ENCODE measurements at regions of chr5 and their contacts with region 1.

Region 1: GRCh38 chr5:72816311-72817145 is at the start of gene TNPO1:
- DNase-seq: peak; percentile 92
- H3K4me3 ChIP-seq: peak within 1 kb of the TSS; percentile 78
- H3K27ac ChIP-seq: peak within 1 kb of the TSS; percentile 86
- H3K4me1 ChIP-seq: peaks cover 21% of the 10 kb centered on the region
- CTCF ChIP-seq: no peak
- total RNA-seq, gene TNPO1: 95.2 and 131 TPM in 2 replicates

Region 2: DNA sequence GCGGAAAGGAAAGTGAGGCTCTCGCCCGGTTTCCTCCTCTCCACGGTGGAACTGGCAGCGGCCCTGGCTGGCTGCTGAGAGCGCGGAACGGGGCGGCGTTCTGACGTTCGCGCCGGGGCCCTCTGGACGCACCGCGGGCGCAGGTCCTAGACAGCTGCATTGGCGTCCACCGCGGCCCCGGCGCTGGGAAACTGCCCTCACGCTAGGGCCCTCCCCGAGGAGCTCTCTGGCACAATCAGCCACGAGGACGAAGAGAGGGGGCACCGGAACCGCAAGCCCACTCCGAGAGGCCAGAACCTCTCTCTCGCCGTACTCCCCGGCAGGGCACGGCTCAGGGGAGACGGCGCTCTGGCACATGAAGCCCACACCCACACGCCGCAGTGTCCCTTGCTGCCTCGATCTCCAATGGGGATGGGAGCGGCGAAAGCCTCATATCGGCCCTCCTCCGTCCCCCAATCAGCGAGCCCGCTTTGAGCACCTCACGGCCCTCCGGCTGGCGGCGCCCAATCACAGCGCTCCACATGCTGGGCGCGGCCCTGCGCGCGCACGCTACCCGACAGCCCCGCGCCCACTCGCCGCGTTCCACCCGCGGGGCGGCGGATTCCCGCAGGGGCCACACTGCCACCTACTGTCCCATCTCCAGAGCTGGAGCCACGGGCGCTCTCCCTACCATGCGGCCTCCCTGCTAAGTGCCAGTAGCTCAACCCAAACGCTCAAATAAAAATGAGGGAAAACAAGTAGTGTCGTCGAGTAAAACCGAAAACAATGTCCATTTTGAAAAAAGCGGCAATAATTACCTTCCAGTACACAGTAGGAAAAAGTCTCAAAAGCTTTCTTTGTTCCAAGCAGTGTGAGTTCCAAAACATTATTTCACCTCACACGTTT is 508.3 kb before region 1 on chr5:
- CTCF ChIA-PET with region 1: no interaction called
- POLR2A ChIA-PET with region 1: interaction called, 7 read pairs
- intact Hi-C with region 1: loop called (anchors 5 kb)
- DNase-seq: peak; percentile 97
- H3K4me3 ChIP-seq: peak overlapping the region; percentile 84
- H3K27ac ChIP-seq: peak overlapping the region; percentile 84
- H3K4me1 ChIP-seq: peaks cover 50% of the 10 kb centered on the region
- CTCF ChIP-seq: peak; percentile 90

Region 3: GRCh38 chr5:72611118-72611730 is 205.3 kb before region 1 on chr5:
- CTCF ChIA-PET with region 1: interaction called, 3 read pairs
- POLR2A ChIA-PET with region 1: no interaction called
- intact Hi-C with region 1: loop called (anchors 1 kb)
- DNase-seq: peak; percentile 57
- H3K4me3 ChIP-seq: no peak overlapping the region
- H3K27ac ChIP-seq: no peak overlapping the region
- H3K4me1 ChIP-seq: no peaks in the 10 kb centered on the region
- CTCF ChIP-seq: peak; percentile 92

Region 4: DNA sequence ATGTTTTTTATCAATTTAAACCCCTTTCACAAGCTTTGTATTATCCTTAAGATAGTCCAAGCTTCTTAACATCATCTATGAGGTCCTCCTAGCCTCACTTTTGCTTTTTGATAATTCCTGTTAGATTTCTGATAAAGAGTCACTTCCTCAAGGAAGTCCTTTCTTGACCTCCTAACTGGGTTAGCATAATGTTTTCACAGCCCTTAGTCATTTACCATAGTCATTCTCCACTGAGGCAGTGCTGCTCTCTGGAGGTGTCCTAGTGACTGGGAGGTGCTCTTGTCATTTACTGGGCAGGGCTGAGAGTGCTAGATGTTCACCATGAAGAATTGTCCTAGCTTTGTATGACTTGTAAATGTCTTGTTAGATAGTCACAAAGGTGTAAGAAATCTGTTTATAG is 26.3 kb after region 1 on chr5:
- CTCF ChIA-PET with region 1: interaction called, 4 read pairs
- POLR2A ChIA-PET with region 1: interaction called, 21 read pairs
- intact Hi-C with region 1: loop called (anchors 1 kb)
- DNase-seq: peak; percentile 10
- H3K4me3 ChIP-seq: no peak overlapping the region
- H3K27ac ChIP-seq: no peak overlapping the region
- H3K4me1 ChIP-seq: peaks cover 10% of the 10 kb centered on the region
- CTCF ChIP-seq: no peak

Region 5: GRCh38 chr5:72955768-72956323 is 139.3 kb after region 1 on chr5 and contains the start of gene FCHO2:
- CTCF ChIA-PET with region 1: no interaction called
- POLR2A ChIA-PET with region 1: interaction called, 4 read pairs
- intact Hi-C with region 1: loop called (anchors 5 kb)
- DNase-seq: peak; percentile 95
- H3K4me3 ChIP-seq: peak within 1 kb of the TSS; percentile 77
- H3K27ac ChIP-seq: no peak within 1 kb of the TSS
- H3K4me1 ChIP-seq: peaks cover 18% of the 10 kb centered on the region
- CTCF ChIP-seq: peak; percentile 83
- total RNA-seq, gene FCHO2: 3.4 and 7.8 TPM in 2 replicates

Region 6: GRCh38 chr5:73498057-73499008 is 681.8 kb after region 1 on chr5 and contains the start of gene BTF3:
- CTCF ChIA-PET with region 1: no interaction called
- POLR2A ChIA-PET with region 1: interaction called, 3 read pairs
- intact Hi-C with region 1: loop called (anchors 5 kb)
- DNase-seq: peak; percentile 97
- H3K4me3 ChIP-seq: peak within 1 kb of the TSS; percentile 98
- H3K27ac ChIP-seq: peak within 1 kb of the TSS; percentile 69
- H3K4me1 ChIP-seq: peaks cover 37% of the 10 kb centered on the region
- CTCF ChIP-seq: no peak
- total RNA-seq, gene BTF3: 350 and 372 TPM in 2 replicates

Region 7: GRCh38 chr5:73812962-73813588 is 996.5 kb after region 1 on chr5:
- CTCF ChIA-PET with region 1: no interaction called
- POLR2A ChIA-PET with region 1: no interaction called
- intact Hi-C with region 1: no loop called
- DNase-seq: no peak
- H3K4me3 ChIP-seq: no peak overlapping the region
- H3K27ac ChIP-seq: no peak overlapping the region
- H3K4me1 ChIP-seq: no peaks in the 10 kb centered on the region
- CTCF ChIP-seq: no peak

Measured in OCI-LY7 (cell line).